ENCODE measurements at regions of chr5 and their contacts with region 1.

Region 1: GRCh38 chr5:151264113-151264512 is 11.1 kb downstream of the GM2A start:
- DNase-seq: no peak
- H3K4me3 Mint-ChIP-seq: no peak overlapping the region
- H3K27ac Mint-ChIP-seq: peak overlapping the region; percentile 20
- H3K4me1 Mint-ChIP-seq: peaks cover 12% of the 10 kb centered on the region
- H3K27me3 Mint-ChIP-seq: no peaks in the 10 kb centered on the region

Region 2: DNA sequence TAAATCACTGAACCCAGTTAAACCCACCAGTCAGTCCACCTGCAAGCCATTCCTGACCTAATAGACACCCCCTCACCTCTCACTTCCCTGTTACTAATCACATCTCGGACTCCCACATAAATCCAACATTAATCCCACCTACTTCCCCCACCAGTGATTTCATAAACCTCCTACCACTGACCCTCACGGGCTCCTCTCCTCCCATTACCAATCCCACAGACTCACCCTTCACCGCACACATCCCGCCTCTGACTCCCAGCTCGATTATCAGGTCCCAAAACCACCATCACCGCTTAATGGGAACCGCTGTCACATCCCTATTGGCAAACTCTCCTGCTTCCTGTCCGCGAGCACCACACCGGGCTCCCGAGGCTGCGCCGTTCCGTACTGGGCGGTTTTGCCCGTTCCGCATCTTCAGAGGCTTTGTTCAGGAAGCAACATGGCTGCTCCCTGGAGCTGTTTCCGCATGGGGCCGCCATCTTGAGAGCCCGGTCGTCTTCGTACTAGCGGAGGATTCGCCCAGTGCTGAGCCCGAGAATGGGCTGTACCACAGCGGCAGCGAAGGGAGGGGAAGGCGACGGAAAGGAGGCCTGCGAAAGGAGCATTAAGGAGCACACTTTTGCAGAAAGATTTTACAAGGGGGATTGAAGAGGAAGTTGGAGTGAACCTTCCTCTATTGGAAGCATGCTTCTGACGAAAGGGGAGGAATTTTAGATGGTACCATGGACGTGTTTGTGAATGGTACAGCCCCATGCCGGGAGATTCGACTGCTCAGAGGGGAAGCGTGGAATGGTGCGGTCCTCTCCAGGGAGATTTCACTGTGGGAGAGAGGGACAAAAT is 359.4 kb before region 1 on chr5 and contains the start of gene ZNF300:
- CTCF ChIA-PET with region 1: no interaction called
- POLR2A ChIA-PET with region 1: no interaction called
- DNase-seq: peak; percentile 63
- H3K4me3 Mint-ChIP-seq: peak within 1 kb of the TSS; percentile 73
- H3K27ac Mint-ChIP-seq: peak within 1 kb of the TSS; percentile 92
- H3K4me1 Mint-ChIP-seq: peaks cover 12% of the 10 kb centered on the region
- H3K27me3 Mint-ChIP-seq: peaks cover 2% of the 10 kb centered on the region
- total RNA-seq, gene ZNF300: 1.9 to 2.2 TPM

Region 3: DNA sequence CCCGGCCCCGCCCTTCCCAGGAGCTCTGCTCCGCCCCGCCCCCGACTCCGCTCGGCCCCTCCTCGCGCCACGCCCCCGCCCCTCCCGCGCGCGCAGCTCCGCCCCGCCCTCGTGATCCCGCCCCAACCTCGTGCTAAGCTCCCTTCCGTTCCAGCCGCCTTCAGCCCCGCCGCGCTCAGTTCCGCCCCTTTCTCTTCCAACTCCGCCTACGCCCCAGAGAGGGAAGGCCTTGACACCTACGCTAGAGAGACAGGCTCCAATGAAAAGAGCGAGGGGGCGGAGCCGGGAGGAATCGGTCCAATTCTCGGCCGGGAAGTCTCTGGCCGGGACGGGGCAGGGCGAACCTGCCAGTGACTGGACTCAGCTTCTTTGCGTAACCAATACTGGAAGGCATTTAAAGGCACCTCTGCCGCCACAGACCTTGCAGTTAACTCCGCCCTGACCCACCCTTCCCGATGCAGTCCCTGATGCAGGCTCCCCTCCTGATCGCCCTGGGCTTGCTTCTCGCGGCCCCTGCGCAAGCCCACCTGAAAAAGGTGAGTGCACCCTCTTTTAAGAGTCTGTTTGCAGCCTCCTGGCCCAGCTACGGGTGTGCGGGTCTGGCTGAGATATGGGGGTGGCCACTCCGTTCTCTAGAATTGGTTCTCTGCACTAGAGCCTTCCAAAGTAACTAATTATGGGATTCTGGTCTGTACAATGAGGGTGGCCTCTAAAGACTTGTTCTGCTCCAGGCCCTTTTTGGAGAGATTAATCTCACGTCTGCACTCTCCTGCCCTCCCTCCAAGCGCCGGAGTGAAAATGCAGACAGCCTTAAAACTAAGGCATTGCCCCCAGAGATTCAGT is 11.1 kb before region 1 on chr5 and contains the start of gene GM2A:
- CTCF ChIA-PET with region 1: interaction called, 13 read pairs
- POLR2A ChIA-PET with region 1: no interaction called
- DNase-seq: peak; percentile 99
- H3K4me3 Mint-ChIP-seq: peak within 1 kb of the TSS; percentile 90
- H3K27ac Mint-ChIP-seq: peak within 1 kb of the TSS; percentile 91
- H3K4me1 Mint-ChIP-seq: peaks cover 37% of the 10 kb centered on the region
- H3K27me3 Mint-ChIP-seq: no peaks in the 10 kb centered on the region
- total RNA-seq, gene GM2A: 15.9 to 19.5 TPM

Measured in activated CD4-positive, alpha-beta T cell treated with anti-CD3 and anti-CD28 coated beads, Interleukin-2, amount 10 ng/mL, durations not matched to agents 7 days and 5 days (primary cell).